Psoas muscle (tissue), 8 donors: ENCODE measurements at regions of chr10 and their contacts with region 1.

Region 1: DNA sequence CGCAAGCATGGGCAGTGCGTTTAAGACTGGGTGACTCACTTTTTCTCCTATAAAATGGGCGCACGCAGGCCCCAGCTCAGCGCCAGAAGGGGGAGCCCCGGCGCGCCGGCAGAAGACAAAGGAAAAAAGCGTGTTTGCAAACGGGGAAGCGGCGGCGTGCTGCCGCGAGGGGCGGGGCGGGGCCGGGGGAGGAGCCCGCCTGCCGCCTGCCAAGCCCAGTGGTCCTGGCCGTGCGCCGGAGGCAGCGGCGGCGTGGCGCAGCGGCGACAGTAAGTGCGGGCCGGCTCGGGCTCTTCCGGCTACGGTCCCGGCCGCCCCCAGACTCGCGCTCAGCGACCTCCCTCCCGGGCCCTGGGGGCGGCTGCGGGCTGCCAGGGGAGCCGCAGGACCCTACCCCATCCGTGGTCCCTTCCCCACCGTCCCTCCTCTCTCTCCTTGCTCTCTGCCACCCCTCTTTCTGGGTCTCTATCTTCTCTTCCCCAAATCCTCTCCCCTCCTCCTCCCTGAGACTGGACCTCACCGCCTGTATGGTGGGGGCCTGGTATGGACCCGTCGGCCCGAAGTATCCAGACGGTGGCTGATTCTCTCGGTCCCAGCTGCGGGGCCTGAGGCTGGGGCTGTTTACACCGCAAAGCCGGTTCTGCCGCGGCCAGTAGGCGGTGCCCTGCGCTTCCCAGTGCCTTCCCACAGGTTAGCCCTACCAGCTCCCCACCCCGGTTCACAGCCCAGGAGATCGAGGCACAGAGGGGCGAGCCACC is at the start of gene SLC29A3:
- DNase-seq: peak; percentile 86 to 89
- ATAC-seq: peak; percentile 88 to 95 (median 92)
- H3K4me3 ChIP-seq: peak within 1 kb of the TSS; percentile 73
- H3K27ac ChIP-seq: peak within 1 kb of the TSS; percentile 70
- H3K4me1 ChIP-seq: peaks cover 10% of the 10 kb centered on the region
- H3K27me3 ChIP-seq: no peaks in the 10 kb centered on the region
- CTCF ChIP-seq: peak; percentile 51
- total RNA-seq, gene SLC29A3: 0.64 to 2.2 (median 1.3) TPM

Region 2: DNA sequence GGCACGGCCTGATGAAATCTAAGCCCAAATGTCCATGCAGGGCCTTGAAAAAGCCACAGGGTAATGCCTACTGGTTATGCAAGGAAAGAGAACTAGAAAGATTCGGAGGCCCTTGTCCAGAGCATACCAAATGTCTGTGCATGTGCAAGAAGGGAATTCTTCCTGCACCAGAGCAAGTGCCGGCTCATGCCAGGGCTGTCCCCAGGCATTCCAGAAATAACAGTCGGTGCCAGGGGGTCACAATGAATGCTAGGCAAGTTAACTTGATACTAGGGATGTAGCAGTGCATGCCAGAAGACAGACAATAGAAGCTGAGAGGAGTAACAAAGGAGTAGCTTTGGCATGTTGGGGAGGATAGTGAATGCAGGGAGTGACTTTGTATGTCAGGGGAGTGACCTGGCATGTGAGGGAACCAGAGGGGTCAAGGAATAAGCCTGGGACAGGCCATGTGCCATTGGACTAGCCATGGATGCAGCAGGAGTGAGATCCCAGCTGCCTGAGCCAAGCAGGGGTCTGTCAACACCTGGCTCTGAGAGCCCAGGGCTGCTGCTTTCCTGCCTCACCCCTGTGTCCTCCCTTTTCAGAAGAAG is 226.3 kb before region 1 on chr10:
- intact Hi-C with region 1: no loop called
- DNase-seq: no peak
- ATAC-seq: peak; percentile 86 to 89 (median 88)
- H3K4me3 ChIP-seq: no peak overlapping the region
- H3K27ac ChIP-seq: peak overlapping the region; percentile 62
- H3K4me1 ChIP-seq: peaks cover 10% of the 10 kb centered on the region
- H3K27me3 ChIP-seq: no peaks in the 10 kb centered on the region
- CTCF ChIP-seq: no peak

Region 3: GRCh38 chr10:71268247-71268691 is 51.0 kb before region 1 on chr10:
- intact Hi-C with region 1: no loop called
- DNase-seq: no peak
- ATAC-seq: peak; percentile 21 to 38 (median 30)
- H3K4me3 ChIP-seq: no peak overlapping the region
- H3K27ac ChIP-seq: peak overlapping the region; percentile 61
- H3K4me1 ChIP-seq: peaks cover 49% of the 10 kb centered on the region
- H3K27me3 ChIP-seq: no peaks in the 10 kb centered on the region
- CTCF ChIP-seq: peak; percentile 28

Region 4: GRCh38 chr10:71383972-71384687 is 64.9 kb after region 1 on chr10:
- intact Hi-C with region 1: loop called in 1 of 2 experiments (anchors 5 kb)
- DNase-seq: peak; percentile 68 to 81
- ATAC-seq: peak; percentile 89 to 96 (median 90)
- H3K4me3 ChIP-seq: no peak overlapping the region
- H3K27ac ChIP-seq: no peak overlapping the region
- H3K4me1 ChIP-seq: no peaks in the 10 kb centered on the region
- H3K27me3 ChIP-seq: no peaks in the 10 kb centered on the region
- CTCF ChIP-seq: peak; percentile 89

Region 5: DNA sequence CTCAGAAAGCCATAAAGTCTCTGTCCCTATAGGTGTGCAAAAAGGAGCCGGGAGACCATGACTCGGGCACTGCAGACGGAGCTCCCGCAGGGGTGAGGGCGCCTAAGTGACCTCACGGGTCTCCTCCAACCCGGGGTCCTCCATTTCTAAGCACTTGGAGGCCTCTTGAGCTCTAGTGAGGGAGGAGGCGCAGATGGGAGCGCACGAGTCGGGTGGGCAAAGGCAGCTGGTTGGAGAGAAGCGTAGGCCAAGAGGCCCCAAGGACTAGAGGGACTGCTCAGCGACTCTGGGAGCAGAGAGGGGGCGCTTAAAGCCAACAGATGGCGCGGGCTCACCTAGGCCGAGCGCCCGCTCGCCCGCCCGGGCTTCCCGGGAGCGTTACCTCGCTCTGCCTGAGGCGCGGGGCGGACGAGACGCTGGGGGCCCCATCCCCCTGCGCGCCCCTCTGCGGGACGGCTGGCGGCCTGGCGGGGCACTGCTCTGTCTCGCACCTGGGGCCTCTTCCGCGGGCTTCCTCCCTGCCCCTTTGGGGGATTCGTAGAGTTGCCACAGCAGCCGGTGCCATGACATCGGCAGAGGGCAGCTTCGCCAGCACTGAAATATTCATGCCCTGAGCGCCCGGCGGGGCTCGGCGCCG is 77.0 kb after region 1 on chr10:
- intact Hi-C with region 1: no loop called
- DNase-seq: peak; percentile 49 to 72
- ATAC-seq: peak; percentile 85 to 93 (median 88)
- H3K4me3 ChIP-seq: peak overlapping the region; percentile 63
- H3K27ac ChIP-seq: no peak overlapping the region
- H3K4me1 ChIP-seq: peaks cover 12% of the 10 kb centered on the region
- H3K27me3 ChIP-seq: peaks cover 0 to 63% (median 18%) of the 10 kb centered on the region in 3 donors
- CTCF ChIP-seq: peak; percentile 50

Region 6: DNA sequence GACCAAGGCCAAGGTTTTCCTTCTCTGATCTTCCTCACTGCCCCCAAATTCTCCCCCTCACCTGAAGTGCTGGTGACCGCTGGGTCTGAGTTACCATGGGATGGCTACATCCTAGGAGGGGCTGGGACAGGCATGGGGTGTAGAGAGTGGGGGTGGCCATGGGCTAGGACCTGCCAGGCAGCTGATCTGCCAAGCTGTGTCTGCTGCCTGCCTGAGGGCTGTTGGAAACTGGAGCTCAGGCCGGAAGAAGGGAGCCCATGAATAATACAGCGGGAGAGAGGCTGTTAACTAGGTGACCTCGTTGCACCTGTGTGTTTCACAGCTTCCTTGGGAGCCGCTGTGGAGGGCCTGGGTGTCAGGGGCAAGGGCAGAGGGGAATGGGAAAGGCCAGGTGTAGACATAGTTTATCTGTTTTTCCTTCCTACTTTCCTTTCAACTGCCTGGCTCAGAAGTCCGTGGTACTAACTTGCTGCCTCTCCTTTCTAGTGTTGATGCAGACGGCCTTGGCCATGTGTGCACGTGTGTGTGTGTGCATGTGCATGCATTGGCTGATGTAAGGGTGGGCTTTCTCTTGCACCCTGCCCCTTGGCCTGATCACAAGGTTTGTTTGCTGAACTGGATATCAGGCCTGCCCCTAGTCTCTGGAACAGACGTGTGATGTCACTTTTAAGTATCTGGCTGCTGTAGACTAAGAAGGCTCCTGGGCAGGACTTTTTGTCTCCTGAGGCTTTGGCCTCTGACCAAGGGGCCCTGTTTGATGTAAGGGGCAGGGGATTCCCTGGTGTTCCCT is 89.4 kb after region 1 on chr10:
- intact Hi-C with region 1: no loop called
- DNase-seq: no peak
- ATAC-seq: no peak
- H3K4me3 ChIP-seq: no peak overlapping the region
- H3K27ac ChIP-seq: no peak overlapping the region
- H3K4me1 ChIP-seq: no peaks in the 10 kb centered on the region
- H3K27me3 ChIP-seq: peaks cover 0 to 7% (median 0%) of the 10 kb centered on the region in 3 donors
- CTCF ChIP-seq: no peak

Region 7: GRCh38 chr10:71608819-71609768 is 289.9 kb after region 1 on chr10:
- intact Hi-C with region 1: loop called (anchors 5 to 10 kb)
- DNase-seq: peak; percentile 82 to 90
- ATAC-seq: peak; percentile 29 to 60 (median 42)
- H3K4me3 ChIP-seq: no peak overlapping the region
- H3K27ac ChIP-seq: no peak overlapping the region
- H3K4me1 ChIP-seq: peaks cover 19% of the 10 kb centered on the region
- H3K27me3 ChIP-seq: no peaks in the 10 kb centered on the region
- CTCF ChIP-seq: peak; percentile 63

Region 8: DNA sequence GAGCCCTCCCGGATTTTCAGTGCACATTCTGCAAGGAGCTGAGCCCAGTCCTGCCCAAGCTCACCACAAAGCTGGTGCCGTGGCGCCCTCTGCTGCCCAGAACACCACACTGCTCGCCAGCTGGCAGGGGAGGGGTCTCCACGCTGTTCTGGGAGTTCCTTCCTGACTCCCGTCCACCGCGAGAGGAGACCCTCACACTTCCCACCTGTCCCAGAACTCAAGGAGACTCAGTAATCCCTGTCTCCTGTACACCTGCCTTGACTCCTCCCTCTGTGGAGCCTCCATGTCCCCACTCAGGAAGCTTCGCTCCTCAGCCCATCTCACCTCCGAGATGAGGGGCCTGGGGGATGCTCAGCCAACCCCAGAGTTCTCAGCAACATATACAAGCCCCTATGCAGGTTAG is 389.1 kb after region 1 on chr10:
- intact Hi-C with region 1: loop called in 1 of 2 experiments (anchors 5 kb)
- DNase-seq: peak in 1 of 2 donors; percentile 75
- ATAC-seq: peak; percentile 57 to 77 (median 66)
- H3K4me3 ChIP-seq: no peak overlapping the region
- H3K27ac ChIP-seq: no peak overlapping the region
- H3K4me1 ChIP-seq: peaks cover 3% of the 10 kb centered on the region
- H3K27me3 ChIP-seq: no peaks in the 10 kb centered on the region
- CTCF ChIP-seq: peak; percentile 78

Region 9: GRCh38 chr10:72337020-72337629 is 1017.9 kb after region 1 on chr10:
- intact Hi-C with region 1: loop called in 1 of 2 experiments (anchors 10 kb)
- DNase-seq: peak; percentile 87 to 93
- ATAC-seq: peak; percentile 15 to 59 (median 38)
- H3K4me3 ChIP-seq: no peak overlapping the region
- H3K27ac ChIP-seq: peak overlapping the region; percentile 96
- H3K4me1 ChIP-seq: peaks cover 55% of the 10 kb centered on the region
- H3K27me3 ChIP-seq: no peaks in the 10 kb centered on the region
- CTCF ChIP-seq: peak; percentile 95